Mucosa of descending colon (tissue), 3 donors: ENCODE measurements at regions of chr3 and their contacts with region 1.

Region 1: DNA sequence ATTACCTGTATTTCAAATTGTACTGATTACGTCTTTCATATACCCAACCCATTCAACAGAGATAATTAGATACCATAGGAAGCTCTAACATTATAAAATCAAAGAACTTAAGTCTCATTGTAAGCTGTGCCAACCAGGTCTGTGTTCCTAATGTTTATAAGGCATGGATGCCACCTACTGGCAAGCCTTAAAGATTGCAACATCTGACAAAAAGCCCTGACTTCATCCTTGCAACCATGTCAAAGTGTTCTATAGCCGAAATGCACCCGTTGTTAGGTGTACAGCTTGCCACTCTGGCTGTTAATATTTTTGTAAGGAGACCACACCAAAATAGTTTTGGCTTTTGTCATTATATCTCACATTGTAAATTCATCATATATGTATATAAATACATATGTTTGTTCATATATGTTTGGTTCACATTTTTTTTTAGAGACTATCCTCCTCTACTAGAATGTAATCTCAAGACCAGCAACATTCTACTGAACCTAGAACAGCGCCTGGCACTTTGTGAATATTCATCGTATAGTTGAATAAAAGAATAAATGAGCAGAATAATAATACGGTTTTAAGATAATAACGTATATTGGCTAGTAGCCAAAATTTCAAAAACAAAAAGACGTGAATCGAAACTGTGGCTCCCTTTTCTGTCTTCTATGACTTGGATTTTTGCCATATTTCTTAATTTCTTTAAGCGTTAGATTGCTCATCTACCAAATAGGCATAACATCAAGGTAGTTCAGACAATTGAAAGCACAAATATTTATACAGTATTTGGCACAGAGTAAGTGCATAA is 258.1 kb downstream of the TBL1XR1 start:
- DNase-seq: peak in 1 of 3 donors; percentile 41
- ATAC-seq: peak; percentile 88
- H3K4me3 ChIP-seq: no peak overlapping the region
- H3K4me1 ChIP-seq: no peaks in the 10 kb centered on the region
- CTCF ChIP-seq: peak; percentile 34

Region 2: GRCh38 chr3:176872771-176873209 is 66.4 kb before region 1 on chr3:
- intact Hi-C with region 1: loop called in 1 of 2 experiments (anchors 5 kb)
- DNase-seq: peak in 2 of 3 donors; percentile 36 to 71
- ATAC-seq: peak; percentile 65
- H3K4me3 ChIP-seq: no peak overlapping the region
- H3K4me1 ChIP-seq: no peaks in the 10 kb centered on the region
- CTCF ChIP-seq: peak; percentile 58

Region 3: DNA sequence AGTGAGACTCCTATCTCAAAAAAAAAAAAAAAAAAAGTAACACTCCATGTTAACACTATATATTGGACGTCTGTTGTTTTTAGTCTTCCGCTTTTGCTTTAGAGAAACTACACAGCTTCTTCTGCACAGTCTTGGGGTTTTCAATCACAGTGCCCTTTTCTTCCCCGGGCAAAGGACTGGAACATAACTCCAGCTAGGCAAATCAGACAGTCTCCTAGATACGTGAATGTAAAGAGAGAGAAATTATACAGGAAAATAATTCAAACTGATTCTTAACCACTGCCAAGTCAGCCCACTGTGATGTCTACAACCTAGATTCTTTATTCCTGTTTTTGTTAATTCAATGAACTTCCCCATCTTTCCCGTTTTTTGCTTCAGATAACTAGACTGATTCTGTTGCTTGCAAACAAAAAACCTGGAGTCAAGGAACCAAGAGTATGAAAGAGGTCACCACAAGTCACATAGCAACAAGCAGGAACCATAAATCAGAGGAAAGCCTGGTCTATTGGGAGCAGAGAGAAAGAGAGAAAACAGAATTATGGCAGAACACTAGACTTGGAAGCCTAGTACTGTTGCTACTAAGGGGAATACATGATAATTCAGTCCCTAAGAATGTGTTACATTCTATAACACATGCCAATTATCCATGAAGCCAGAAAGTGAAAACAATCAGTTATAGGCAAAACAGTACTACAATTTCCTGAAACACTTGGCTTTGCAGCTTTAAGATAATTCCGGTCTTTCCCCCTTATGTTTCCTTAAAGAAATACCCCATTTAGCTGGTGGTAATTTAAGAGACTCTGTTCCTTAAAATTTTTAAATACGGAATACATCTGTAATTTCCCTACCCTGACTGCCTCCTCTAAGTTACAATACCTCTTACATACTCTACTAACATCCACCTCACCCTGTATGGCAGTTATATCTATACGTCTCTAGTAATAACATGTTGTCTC is 194.9 kb after region 1 on chr3:
- intact Hi-C with region 1: no loop called
- DNase-seq: no peak
- ATAC-seq: no peak
- H3K4me3 ChIP-seq: no peak overlapping the region
- H3K4me1 ChIP-seq: peaks cover 18% of the 10 kb centered on the region
- CTCF ChIP-seq: no peak